ENCODE measurements at regions of chr2 and their contacts with region 1.

Region 1: GRCh38 chr2:230913406-230914143 is 11.5 kb downstream of the GPR55 start:
- DNase-seq: peak in 3 of 5 donors; percentile 25 to 44 (median 36)
- ATAC-seq: peak in 1 of 4 donors; percentile 24
- H3K4me3 ChIP-seq: no peak overlapping the region
- H3K27ac ChIP-seq: peak overlapping the region in 1 of 12 donors; percentile 72
- H3K4me1 ChIP-seq: peaks cover 0 to 10% (median 0%) of the 10 kb centered on the region in 12 donors
- H3K27me3 ChIP-seq: peaks cover 0 to 13% (median 0%) of the 10 kb centered on the region in 9 donors
- CTCF ChIP-seq: peak in 9 of 12 donors; percentile 3 to 55 (median 37)
- POLR2A ChIP-seq: no peak

Region 2: DNA sequence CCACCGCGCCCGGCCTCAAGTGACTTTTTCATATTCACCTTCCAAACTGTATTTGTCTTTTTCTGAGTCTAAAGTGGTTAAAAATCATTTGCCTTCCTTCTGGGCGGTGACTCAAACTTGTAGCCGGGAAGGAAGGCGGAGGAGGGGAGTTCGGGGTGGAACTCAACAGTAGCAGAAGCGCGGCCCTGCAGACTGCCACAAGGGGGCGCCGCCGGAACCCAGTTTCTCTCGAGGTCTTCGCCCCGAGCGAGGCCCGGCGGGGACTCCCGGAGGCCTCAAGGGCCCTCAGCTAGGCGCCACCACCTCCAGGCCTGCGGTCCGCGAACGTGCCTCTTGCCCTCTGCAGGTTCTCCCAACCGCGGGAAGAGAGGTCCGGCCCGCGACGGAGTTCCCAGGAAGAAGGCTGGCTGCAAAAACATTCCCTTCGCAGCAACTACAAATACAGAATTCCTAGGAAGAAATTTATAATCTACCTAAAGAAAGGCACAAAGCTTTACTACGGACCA is 65.6 kb before region 1 on chr2:
- intact Hi-C with region 1: loop called in 2 of 10 experiments (anchors 2 to 5 kb)
- DNase-seq: peak; percentile 82 to 92 (median 84)
- ATAC-seq: peak in 3 of 4 donors; percentile 87 to 94 (median 88)
- H3K4me3 ChIP-seq: peak overlapping the region in 6 of 12 donors; percentile 15 to 38 (median 30)
- H3K27ac ChIP-seq: no peak overlapping the region
- H3K4me1 ChIP-seq: peaks cover 0 to 9% (median 0%) of the 10 kb centered on the region in 12 donors
- H3K27me3 ChIP-seq: peaks cover 0 to 47% (median 13%) of the 10 kb centered on the region in 9 donors
- CTCF ChIP-seq: peak; percentile 77 to 97 (median 90)
- POLR2A ChIP-seq: no peak

Region 3: DNA sequence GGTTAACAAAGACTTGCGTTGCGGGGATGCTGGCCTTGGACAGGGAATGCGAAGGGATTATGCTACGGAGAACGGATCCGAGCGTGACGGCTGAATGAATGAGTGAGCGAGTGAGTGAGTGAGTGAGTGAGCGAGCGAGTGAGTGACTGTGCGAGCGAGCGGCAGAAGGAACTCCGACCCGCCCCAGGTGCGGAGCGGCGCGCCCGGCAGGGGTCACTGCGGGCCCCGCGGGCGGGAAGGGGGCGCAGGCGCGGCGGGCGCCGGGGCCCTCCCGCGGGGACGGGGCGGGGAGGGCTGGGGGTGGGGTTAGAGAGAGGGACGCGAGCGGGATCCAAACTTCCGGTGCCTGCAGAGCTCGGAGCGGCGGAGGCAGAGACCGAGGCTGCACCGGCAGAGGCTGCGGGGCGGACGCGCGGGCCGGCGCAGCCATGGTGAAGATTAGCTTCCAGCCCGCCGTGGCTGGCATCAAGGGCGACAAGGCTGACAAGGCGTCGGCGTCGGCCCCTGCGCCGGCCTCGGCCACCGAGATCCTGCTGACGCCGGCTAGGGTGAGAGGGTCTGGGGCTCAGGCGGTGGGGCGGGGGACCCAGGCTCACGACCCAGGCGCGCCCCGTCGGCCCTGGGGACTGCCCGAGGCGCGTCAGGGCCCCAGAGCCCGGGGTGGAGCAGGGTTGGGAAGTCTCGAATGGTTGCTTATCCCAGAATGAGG is 48.8 kb before region 1 on chr2 and contains the start of gene ITM2C:
- intact Hi-C with region 1: loop called in 1 of 10 experiments (anchors 5 kb)
- DNase-seq: peak; percentile 70 to 83 (median 71)
- ATAC-seq: peak in 3 of 4 donors; percentile 76 to 90 (median 83)
- H3K4me3 ChIP-seq: peak within 1 kb of the TSS; percentile 48 to 93 (median 76)
- H3K27ac ChIP-seq: peak within 1 kb of the TSS in 5 of 12 donors; percentile 43 to 73 (median 58)
- H3K4me1 ChIP-seq: peaks cover 0 to 46% (median 16%) of the 10 kb centered on the region in 12 donors
- H3K27me3 ChIP-seq: peaks cover 0 to 38% (median 16%) of the 10 kb centered on the region in 9 donors
- CTCF ChIP-seq: peak in 8 of 12 donors; percentile 28 to 59 (median 44)
- POLR2A ChIP-seq: no peak
- total RNA-seq, gene ITM2C: 23.3 to 36.6 (median 26.5) TPM

Region 4: DNA sequence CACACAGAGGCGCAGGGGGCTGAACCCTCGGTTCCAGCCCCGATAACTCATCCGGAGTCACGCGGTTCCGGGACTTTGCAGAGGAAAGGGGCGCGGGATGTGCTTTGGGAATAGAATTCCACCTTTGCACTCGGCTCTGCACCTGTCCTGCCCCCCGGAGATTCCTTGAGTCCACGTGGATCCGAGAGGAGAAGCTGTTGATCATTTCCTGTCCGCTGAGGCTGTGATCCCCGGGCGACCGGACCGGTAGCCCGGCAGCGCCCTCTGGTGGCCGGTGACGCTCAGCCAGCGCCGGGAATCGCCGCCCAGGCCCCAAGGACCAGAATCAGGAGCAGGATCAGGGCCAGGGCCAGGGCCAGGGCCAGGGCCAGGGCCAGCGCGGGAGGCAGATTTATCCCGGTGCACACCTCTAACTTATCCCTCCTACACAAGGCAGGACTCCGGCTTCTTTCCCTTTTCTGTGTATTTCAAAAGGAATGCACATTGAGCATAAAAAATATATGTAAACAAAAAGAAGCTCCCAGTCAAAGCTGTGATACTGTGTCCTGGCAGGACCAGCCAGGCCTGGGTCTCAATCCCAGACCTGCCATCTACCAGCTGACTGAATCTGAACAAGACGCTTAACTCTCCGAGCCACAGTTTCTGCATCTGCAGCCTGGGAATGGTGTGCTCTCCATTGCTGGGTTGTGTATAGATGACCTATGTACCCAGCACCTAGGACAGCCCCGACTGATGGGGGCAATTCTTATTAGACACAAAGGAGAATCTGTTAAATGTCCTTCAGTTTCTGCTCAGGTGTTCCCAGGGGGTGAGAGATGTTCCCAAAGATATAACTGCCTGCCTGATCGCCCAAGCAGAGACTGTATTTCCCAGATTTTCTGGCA is 73.8 kb after region 1 on chr2:
- intact Hi-C with region 1: loop called in 2 of 10 experiments (anchors 5 to 10 kb)
- DNase-seq: peak; percentile 72 to 90 (median 77)
- ATAC-seq: peak; percentile 64 to 94 (median 84)
- H3K4me3 ChIP-seq: peak overlapping the region in 11 of 12 donors; percentile 10 to 48 (median 39)
- H3K27ac ChIP-seq: no peak overlapping the region
- H3K4me1 ChIP-seq: peaks cover 0 to 5% (median 4%) of the 10 kb centered on the region in 12 donors
- H3K27me3 ChIP-seq: peaks cover 7 to 39% (median 27%) of the 10 kb centered on the region in 9 donors
- CTCF ChIP-seq: peak; percentile 89 to 97 (median 95)
- POLR2A ChIP-seq: no peak

Region 5: DNA sequence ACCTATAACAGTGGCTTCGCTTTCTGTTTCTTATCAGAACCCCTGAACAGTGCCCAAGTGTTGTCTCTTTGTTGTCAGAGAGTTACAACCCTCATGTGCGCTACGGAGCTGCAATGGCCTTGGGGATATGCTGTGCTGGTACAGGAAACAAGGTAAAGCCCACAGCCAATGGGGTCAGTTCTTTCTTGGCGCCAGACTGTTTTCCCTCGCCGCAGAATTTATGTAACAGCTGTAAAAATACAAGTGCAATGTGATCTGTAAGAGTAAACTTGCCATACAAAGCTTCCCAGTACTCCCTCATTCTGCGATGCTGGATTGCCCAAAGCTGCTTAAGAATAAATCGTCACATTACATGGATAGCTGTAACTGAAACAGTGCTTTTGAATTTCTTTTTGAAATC is 225.1 kb after region 1 on chr2:
- intact Hi-C with region 1: no loop called
- DNase-seq: no peak
- ATAC-seq: peak in 1 of 4 donors; percentile 36
- H3K4me3 ChIP-seq: no peak overlapping the region
- H3K27ac ChIP-seq: peak overlapping the region in 1 of 12 donors; percentile 21
- H3K4me1 ChIP-seq: peaks cover 0 to 25% (median 0%) of the 10 kb centered on the region in 12 donors
- H3K27me3 ChIP-seq: no peaks in the 10 kb centered on the region
- CTCF ChIP-seq: no peak
- POLR2A ChIP-seq: no peak

Region 6: DNA sequence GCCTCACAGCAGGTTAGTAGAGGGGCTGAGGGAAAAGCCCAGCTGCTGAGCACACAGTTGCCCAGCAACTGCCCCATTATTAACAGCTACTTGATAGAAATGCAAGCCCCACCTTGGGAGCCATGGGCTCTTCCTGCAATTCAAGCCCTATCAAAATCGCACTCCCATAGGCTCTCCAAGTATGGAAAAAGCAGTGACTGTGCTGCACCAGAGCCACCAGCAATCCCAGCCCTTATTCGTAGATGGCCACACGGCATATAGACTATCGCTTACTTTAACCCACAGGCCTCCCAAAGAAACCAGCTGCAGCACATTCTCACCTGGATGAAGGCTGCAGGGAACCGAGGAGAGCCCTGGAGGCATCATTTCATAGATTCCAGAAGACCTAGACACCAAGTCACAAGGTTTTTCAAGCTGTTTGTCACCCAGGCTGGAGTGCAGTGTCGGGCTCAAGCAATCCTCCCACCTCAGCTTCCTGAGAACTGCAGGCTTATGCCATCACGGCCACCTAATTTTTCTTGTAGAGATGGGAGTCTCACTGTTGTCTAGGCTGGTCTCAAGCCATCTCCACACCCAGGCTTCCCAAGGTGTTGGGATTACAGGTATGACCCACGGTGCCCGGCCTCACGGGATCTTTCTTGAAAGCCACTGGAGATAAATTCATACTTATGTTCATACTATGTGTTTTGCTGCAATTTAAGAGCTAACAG is 539.4 kb after region 1 on chr2:
- intact Hi-C with region 1: no loop called
- DNase-seq: no peak
- ATAC-seq: peak in 3 of 4 donors; percentile 5 to 15 (median 13)
- H3K4me3 ChIP-seq: no peak overlapping the region
- H3K27ac ChIP-seq: peak overlapping the region in 1 of 12 donors; percentile 12
- H3K4me1 ChIP-seq: peaks cover 0 to 6% (median 0%) of the 10 kb centered on the region in 12 donors
- H3K27me3 ChIP-seq: no peaks in the 10 kb centered on the region
- CTCF ChIP-seq: no peak
- POLR2A ChIP-seq: no peak